Activated T-helper 1 cell treated with anti-CD3 and anti-CD28 coated beads, Interleukin-12 subunit alpha, Interleukin-12 subunit beta, Interleukin-2, Interleukin-4 antibody, amounts not matched to agents 30 ng/mL and 10 ng/mL and 1 ng/mL, durations not matched to agents 14 hours and 24 hours and 36 hours (primary cell): ENCODE measurements at regions of chr17 and their contacts with region 1.

Region 1: DNA sequence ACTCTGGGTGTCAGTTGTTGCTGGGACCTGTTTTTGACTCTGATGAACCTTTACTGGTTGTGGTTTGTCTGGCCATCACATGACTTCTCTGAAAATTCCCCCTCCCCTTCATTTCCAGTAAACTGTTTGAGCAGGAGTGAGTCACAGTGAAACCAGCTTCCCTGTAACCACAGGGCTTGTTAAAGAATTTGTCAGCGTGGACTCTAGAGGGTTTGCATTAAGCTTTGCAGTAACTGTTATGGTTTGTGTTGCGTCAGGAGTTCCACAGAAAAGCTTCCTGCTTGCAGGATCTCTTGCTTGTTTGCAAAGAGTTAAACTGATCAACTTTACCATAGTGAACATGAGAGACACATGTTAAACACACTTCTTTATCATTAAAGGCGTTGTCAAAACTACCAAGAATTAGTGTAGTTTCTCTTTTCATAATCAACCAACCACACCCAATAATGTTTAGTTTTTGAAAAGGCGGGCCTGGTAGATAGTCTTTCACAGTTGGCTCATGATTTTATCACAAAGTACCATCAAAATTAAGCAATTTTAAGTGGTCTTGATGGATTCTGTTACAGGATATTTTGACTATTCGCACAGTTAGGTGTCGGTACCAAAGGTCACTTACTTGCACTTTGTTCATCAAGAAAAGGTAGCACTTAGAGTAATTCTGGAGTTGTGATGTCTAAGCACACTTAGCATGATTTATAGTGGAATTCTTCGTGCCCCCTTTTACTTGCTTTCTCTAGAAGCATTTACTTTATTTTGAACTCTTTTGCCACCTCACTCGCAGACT is 79.3 kb downstream of the VMP1 start:
- DNase-seq: peak; percentile 90
- H3K4me3 Mint-ChIP-seq: peak overlapping the region; percentile 60
- H3K27ac Mint-ChIP-seq: peak overlapping the region; percentile 90
- H3K4me1 Mint-ChIP-seq: peaks cover 57% of the 10 kb centered on the region
- H3K27me3 Mint-ChIP-seq: peaks cover 2% of the 10 kb centered on the region

Region 2: GRCh38 chr17:59435238-59435637 is 351.5 kb before region 1 on chr17:
- intact Hi-C with region 1: loop called (anchors 1 kb)
- DNase-seq: no peak
- H3K4me3 Mint-ChIP-seq: no peak overlapping the region
- H3K27ac Mint-ChIP-seq: peak overlapping the region; percentile 88
- H3K4me1 Mint-ChIP-seq: peaks cover 64% of the 10 kb centered on the region
- H3K27me3 Mint-ChIP-seq: peaks cover 3% of the 10 kb centered on the region

Region 3: GRCh38 chr17:59753522-59754467 is 32.9 kb before region 1 on chr17:
- intact Hi-C with region 1: loop called (anchors 1 kb)
- DNase-seq: peak; percentile 26
- H3K4me3 Mint-ChIP-seq: peak overlapping the region; percentile 80
- H3K27ac Mint-ChIP-seq: peak overlapping the region; percentile 93
- H3K4me1 Mint-ChIP-seq: peaks cover 64% of the 10 kb centered on the region
- H3K27me3 Mint-ChIP-seq: no peaks in the 10 kb centered on the region

Region 4: GRCh38 chr17:59829217-59830006 is 42.7 kb after region 1 on chr17:
- intact Hi-C with region 1: loop called (anchors 1 kb)
- DNase-seq: peak; percentile 66
- H3K4me3 Mint-ChIP-seq: peak overlapping the region; percentile 90
- H3K27ac Mint-ChIP-seq: peak overlapping the region; percentile 100
- H3K4me1 Mint-ChIP-seq: peaks cover 79% of the 10 kb centered on the region
- H3K27me3 Mint-ChIP-seq: no peaks in the 10 kb centered on the region

Region 5: DNA sequence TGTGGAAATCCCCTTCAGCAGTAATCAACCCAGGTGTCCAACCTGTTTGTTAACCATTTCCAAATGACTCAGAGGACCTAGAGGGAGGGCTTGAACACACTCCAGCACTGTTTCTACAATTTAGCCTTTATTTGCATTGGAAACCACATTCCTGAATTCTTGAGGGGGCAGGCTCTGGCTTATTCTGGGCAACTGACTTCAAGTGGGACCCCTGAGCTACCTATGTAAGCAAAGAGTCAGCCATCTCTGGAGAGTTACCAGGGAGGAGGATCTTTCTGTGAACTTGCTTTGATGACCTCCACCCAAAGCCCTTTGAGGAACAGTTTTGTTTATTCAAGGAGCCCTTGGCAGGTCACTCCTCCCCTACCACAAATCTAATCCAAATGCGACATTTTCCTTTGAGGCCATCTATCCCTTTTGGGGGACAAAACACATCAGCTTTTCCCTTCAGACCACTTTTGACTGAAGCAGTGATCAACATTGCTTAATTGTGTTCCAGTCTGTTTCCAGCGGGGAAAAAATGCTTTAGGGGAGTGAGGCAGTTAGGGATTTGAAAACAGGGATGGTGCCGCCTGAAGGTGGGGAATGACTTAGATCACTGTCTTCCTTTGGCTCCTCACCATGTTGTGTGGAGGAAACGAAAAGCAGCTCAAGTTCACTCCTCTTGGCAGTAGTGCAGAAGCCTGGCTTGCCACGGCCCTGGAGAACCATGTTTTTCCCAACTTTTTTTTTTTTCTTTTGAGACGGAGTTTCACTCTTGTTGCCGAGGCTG is 59.9 kb after region 1 on chr17:
- intact Hi-C with region 1: loop called (anchors 1 kb)
- DNase-seq: peak; percentile 51
- H3K4me3 Mint-ChIP-seq: peak overlapping the region; percentile 50
- H3K27ac Mint-ChIP-seq: peak overlapping the region; percentile 94
- H3K4me1 Mint-ChIP-seq: peaks cover 68% of the 10 kb centered on the region
- H3K27me3 Mint-ChIP-seq: no peaks in the 10 kb centered on the region

Region 6: GRCh38 chr17:59941131-59941530 is 154.4 kb after region 1 on chr17:
- intact Hi-C with region 1: loop called (anchors 1 kb)
- DNase-seq: no peak
- H3K4me3 Mint-ChIP-seq: no peak overlapping the region
- H3K27ac Mint-ChIP-seq: peak overlapping the region; percentile 84
- H3K4me1 Mint-ChIP-seq: peaks cover 54% of the 10 kb centered on the region
- H3K27me3 Mint-ChIP-seq: no peaks in the 10 kb centered on the region

Region 7: DNA sequence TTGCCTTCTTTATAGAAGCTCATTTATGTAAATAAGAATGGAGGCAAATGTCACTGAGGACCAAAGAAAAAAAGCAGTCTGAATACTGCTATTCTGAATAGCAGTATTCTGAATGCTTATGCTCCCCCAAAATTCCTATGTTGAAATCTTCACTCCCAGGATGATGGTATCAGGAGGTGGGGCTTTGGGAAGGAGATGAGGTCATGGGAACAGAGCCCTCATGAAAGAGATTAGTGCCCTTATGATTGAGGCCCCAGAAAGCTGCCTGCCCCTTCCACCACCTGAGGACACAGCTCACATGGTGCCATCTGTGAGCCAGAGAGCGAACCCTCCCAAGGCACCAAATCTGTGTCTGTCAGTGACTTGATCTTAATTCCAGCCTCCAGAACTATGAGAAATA is 263.2 kb after region 1 on chr17:
- intact Hi-C with region 1: no loop called
- DNase-seq: no peak
- H3K4me3 Mint-ChIP-seq: no peak overlapping the region
- H3K27ac Mint-ChIP-seq: no peak overlapping the region
- H3K4me1 Mint-ChIP-seq: no peaks in the 10 kb centered on the region
- H3K27me3 Mint-ChIP-seq: no peaks in the 10 kb centered on the region